ENCODE measurements at regions of chr5 and their contacts with region 1.

Region 1: DNA sequence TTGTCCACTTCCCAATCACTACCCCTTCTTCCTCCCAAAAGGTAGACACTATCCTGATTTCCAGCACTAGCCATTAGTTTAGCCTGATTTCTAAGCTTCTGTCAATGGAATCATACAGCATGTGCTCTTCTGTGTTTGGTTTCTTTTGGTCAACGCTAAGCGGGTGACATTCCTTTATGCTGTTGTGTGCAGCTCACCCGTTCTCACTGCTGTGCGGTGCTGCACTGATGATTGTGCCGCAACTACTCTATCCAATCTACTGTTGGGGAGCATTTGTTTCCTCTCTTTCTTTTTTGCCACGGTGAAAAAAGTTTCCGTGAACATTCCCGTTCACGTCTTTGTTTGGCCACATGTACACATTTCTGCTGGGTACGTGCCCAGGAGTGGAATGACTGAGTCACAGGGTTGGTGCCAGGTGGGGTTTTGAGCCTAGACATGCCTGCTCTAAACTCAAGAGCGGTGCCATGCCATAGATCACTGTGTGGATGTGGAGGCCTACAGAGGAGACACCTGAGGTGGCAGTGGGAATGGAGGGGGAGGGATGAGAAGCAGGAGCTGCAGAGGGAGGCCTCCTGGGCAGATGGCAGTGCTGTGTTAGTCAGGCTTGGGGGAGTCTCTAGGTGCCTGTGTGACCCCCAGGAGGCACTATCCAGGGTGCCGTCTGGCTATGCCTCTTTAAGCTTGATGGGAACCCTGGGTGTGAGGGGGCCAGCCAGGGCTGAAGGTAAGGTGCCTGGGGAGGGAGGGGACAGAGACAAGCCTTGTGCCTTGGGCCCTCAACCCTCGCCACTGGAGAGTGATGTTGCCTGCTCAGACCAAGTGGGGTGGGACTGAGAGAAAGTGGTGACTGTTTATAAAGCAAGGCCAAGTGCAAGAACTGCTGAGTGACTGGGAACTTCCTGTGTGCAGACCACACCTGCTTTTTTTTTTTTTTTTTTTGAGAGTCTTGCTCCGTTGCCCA is 11.4 kb upstream of the ANKRD33B start:
- DNase-seq: no peak
- H3K4me3 ChIP-seq: no peak overlapping the region
- H3K27ac ChIP-seq: peak overlapping the region; percentile 98
- H3K27me3 ChIP-seq: no peaks in the 10 kb centered on the region
- CTCF ChIP-seq: no peak

Region 2: DNA sequence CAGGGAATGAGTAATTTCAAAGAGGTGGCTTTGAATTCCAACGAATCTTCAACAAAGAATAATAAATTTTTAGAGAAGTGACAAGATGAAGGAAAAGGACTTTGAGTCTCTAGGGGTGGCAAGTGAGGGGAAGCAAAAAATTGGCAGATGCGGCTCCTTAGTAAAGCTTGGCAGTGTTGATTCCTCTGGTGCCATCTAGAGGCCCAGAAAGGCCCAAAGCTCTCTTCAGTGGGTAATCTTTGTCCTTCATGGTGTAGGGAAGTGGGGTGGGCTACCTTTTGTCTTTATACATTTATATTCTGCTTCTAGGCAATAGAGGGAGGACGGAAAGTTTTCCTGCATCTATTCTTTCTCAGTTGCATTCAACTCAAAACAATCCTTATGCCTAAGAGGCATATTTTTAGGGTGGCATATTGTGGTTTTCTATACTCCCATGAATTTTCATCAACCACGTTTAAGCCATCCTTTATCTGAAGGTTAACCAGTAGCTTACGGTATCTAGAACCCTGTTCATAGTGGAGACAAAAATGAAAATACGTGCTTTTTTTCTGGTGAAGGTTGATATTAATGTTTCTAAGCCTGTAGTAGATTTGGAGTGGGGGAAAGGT is 128.2 kb before region 1 on chr5:
- CTCF ChIA-PET with region 1: no interaction called
- POLR2A ChIA-PET with region 1: no interaction called
- DNase-seq: no peak
- H3K4me3 ChIP-seq: no peak overlapping the region
- H3K27ac ChIP-seq: no peak overlapping the region
- H3K27me3 ChIP-seq: no peaks in the 10 kb centered on the region
- CTCF ChIP-seq: peak; percentile 65

Region 3: DNA sequence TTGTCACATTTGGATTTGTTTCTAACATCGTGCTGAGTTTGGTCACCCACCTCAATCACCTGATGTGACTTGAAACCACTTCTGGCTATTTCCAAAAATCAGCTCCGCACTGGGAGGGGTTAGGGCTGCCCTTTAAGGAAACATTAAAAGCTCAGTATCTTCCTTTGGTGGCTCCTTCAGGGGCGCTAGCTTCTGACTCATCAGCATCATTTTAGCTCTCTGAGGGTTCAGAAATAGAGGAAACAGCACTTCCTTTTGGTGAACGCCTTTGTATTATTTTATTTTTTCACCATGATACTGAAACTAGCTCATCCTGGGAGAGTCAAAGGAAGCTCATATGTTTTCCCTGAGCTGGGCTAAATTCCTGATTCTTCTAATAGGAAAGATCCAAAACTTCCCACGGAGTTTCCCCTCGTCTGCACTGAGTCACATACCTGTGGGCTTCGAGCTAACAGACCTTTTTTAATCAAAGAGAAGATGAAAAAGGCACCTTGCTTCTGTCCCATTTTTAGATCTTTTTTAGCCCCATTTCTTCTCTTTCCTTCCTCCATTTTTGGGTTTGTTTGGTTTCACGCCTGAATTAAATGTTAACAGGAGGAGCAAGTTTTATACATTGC is 62.5 kb before region 1 on chr5:
- CTCF ChIA-PET with region 1: no interaction called
- POLR2A ChIA-PET with region 1: interaction called, 12 read pairs
- DNase-seq: no peak
- H3K4me3 ChIP-seq: no peak overlapping the region
- H3K27ac ChIP-seq: no peak overlapping the region
- H3K27me3 ChIP-seq: peaks cover 3% of the 10 kb centered on the region
- CTCF ChIP-seq: no peak

Region 4: GRCh38 chr5:10513501-10514442 is 38.7 kb before region 1 on chr5:
- CTCF ChIA-PET with region 1: no interaction called
- POLR2A ChIA-PET with region 1: interaction called, 11 read pairs
- DNase-seq: peak; percentile 57
- H3K4me3 ChIP-seq: no peak overlapping the region
- H3K27ac ChIP-seq: peak overlapping the region; percentile 73
- H3K27me3 ChIP-seq: no peaks in the 10 kb centered on the region
- CTCF ChIP-seq: no peak

Region 5: DNA sequence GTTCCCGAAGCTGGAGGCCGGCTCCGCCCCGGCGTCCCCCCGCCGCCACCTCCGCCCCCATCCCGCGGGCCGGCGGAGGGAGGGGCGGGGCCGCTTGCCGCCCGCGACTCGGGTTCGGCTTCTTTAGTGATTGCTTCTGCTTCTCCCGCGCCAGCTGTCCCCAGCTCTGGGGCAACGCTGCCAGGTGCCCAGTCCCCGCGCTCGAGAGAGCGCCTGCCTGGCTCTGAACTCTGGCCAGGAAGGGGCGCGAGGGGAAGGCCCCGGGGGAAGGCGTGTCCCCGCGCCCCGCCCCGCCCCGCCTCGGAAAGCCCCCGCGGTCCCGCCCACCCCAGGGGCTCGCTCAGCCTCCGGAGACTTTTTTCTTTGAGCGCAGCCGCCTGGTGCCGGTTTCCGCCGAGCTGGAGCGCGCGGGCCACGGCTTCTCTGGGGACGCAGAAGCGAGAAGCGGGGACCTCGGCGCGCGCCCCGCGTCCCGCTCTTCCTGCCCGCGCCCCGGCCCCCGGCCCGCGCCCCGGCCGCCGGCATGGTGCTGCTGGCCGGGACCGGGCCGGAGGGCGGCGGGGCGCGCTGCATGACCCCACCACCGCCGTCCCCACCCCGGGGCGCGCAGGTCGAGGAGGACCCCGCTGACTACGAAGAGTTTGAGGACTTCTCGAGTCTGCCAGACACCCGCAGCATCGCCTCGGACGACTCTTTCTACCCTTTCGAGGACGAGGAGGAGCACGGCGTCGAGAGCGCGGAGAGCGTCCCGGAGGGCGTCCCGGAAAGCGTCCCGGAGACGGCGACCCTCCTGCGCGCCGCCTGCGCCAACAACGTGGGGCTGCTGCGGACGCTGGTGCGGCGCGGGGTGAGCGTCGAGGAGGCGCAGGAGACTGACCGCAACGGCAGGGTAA is 11.7 kb after region 1 on chr5 and contains the start of gene ANKRD33B:
- CTCF ChIA-PET with region 1: interaction called, 4 read pairs
- POLR2A ChIA-PET with region 1: interaction called, 10 read pairs
- DNase-seq: no peak
- H3K4me3 ChIP-seq: peak within 1 kb of the TSS; percentile 90
- H3K27ac ChIP-seq: peak within 1 kb of the TSS; percentile 65
- H3K27me3 ChIP-seq: no peaks in the 10 kb centered on the region
- CTCF ChIP-seq: no peak
- polyA plus RNA-seq, gene ANKRD33B: 4.6 and 4.8 TPM in 2 replicates